MCF 10A (cell line): ENCODE measurements at regions of chr12 and their contacts with region 1.

Region 1: DNA sequence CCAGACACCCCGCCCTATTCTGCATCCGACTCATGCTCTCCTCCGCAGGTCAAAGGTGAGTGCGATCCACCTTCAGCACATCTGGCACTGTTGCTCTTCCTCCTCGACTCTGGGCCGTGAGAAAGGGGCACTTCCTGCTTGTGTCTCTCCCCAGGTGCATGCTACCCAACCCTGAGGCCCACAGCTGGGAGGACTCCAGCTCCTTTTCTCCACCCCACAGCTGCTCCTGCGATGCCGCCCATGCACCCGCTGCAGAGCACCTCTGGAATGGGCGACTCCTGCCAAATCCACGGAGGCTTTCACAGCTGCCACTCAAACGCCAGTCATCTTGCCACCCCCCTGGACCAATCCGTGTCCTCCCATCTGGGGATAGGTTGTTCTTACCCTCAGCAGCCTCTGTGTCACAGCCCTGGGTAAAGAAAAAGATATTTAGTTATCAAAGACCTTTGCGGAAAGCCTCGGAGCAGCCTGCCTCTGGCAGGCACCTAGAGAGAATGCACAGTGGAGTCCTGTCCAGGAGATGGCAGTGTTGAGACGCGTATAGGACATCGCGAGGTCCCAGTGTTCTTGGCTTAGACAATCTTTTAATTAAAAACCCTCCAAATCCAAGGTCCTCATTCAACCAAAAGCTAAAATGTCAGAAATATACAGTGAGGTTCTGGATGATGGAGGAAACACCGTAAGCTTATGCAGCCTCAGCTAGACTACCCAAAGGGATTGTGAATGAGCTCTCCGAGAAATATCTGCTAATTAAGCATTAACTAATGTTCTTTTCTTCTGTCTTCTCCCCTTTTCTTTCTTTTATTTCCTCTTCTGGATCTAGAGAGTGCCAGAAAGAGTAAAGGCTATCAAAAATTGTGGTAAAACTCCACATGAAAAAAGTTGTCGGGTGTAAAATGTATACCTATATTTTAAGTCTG is 54.3 kb downstream of the MYRFL start:
- DNase-seq: peak; percentile 83
- H3K4me3 Mint-ChIP-seq: peak overlapping the region; percentile 60
- H3K27ac Mint-ChIP-seq: no peak overlapping the region
- H3K4me1 Mint-ChIP-seq: peaks cover 7% of the 10 kb centered on the region
- H3K27me3 Mint-ChIP-seq: no peaks in the 10 kb centered on the region
- CTCF ChIP-seq: peak; percentile 94

Region 2: GRCh38 chr12:69738351-69739286 is 140.7 kb before region 1 on chr12 and contains the start of gene RAB3IP:
- CTCF ChIA-PET with region 1: interaction called, 3 read pairs
- POLR2A ChIA-PET with region 1: interaction called, 3 read pairs
- intact Hi-C with region 1: loop called (anchors 2 kb)
- DNase-seq: peak; percentile 82
- H3K4me3 Mint-ChIP-seq: peak within 1 kb of the TSS; percentile 86
- H3K27ac Mint-ChIP-seq: peak within 1 kb of the TSS; percentile 86
- H3K4me1 Mint-ChIP-seq: peaks cover 19% of the 10 kb centered on the region
- H3K27me3 Mint-ChIP-seq: no peaks in the 10 kb centered on the region
- CTCF ChIP-seq: peak; percentile 65
- total RNA-seq, gene RAB3IP: 21.9 and 31.5 TPM in 2 replicates

Region 3: GRCh38 chr12:69810870-69811498 is 68.3 kb before region 1 on chr12:
- CTCF ChIA-PET with region 1: no interaction called
- POLR2A ChIA-PET with region 1: no interaction called
- intact Hi-C with region 1: no loop called
- DNase-seq: no peak
- H3K4me3 Mint-ChIP-seq: no peak overlapping the region
- H3K27ac Mint-ChIP-seq: no peak overlapping the region
- H3K4me1 Mint-ChIP-seq: no peaks in the 10 kb centered on the region
- H3K27me3 Mint-ChIP-seq: no peaks in the 10 kb centered on the region
- CTCF ChIP-seq: no peak

Region 4: DNA sequence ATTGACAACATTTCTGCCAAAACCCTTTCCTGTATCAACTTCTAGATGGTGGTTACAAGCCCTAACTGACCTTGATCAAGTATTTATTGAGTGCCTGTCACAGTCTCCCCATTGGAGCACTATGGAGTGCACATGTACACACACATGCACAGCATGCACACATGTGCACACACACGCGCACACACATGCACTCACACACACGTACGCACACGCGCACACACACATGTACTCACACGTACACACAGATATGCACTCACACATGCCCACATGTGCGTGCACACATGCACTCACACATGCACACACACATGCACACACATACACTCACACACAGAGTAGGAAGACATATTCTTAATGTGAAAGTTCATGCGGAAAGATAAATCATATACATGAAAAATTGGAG is 10.6 kb before region 1 on chr12:
- CTCF ChIA-PET with region 1: interaction called, 11 read pairs
- POLR2A ChIA-PET with region 1: no interaction called
- intact Hi-C with region 1: no loop called
- DNase-seq: no peak
- H3K4me3 Mint-ChIP-seq: no peak overlapping the region
- H3K27ac Mint-ChIP-seq: no peak overlapping the region
- H3K4me1 Mint-ChIP-seq: peaks cover 8% of the 10 kb centered on the region
- H3K27me3 Mint-ChIP-seq: no peaks in the 10 kb centered on the region
- CTCF ChIP-seq: no peak

Region 5: GRCh38 chr12:69900720-69901131 is 21.4 kb after region 1 on chr12:
- CTCF ChIA-PET with region 1: interaction called, 58 read pairs
- POLR2A ChIA-PET with region 1: interaction called, 5 read pairs
- intact Hi-C with region 1: no loop called
- DNase-seq: peak; percentile 92
- H3K4me3 Mint-ChIP-seq: no peak overlapping the region
- H3K27ac Mint-ChIP-seq: no peak overlapping the region
- H3K4me1 Mint-ChIP-seq: peaks cover 10% of the 10 kb centered on the region
- H3K27me3 Mint-ChIP-seq: no peaks in the 10 kb centered on the region
- CTCF ChIP-seq: peak; percentile 89

Region 6: GRCh38 chr12:71014180-71014785 is 1135.0 kb after region 1 on chr12:
- CTCF ChIA-PET with region 1: interaction called, 11 read pairs
- POLR2A ChIA-PET with region 1: no interaction called
- intact Hi-C with region 1: loop called (anchors 1 kb)
- DNase-seq: peak; percentile 77
- H3K4me3 Mint-ChIP-seq: peak overlapping the region; percentile 46
- H3K27ac Mint-ChIP-seq: peak overlapping the region; percentile 68
- H3K4me1 Mint-ChIP-seq: peaks cover 11% of the 10 kb centered on the region
- H3K27me3 Mint-ChIP-seq: no peaks in the 10 kb centered on the region
- CTCF ChIP-seq: peak; percentile 81